K562 (cell line): ENCODE measurements at regions of chr1 and their contacts with region 1.

Region 1: DNA sequence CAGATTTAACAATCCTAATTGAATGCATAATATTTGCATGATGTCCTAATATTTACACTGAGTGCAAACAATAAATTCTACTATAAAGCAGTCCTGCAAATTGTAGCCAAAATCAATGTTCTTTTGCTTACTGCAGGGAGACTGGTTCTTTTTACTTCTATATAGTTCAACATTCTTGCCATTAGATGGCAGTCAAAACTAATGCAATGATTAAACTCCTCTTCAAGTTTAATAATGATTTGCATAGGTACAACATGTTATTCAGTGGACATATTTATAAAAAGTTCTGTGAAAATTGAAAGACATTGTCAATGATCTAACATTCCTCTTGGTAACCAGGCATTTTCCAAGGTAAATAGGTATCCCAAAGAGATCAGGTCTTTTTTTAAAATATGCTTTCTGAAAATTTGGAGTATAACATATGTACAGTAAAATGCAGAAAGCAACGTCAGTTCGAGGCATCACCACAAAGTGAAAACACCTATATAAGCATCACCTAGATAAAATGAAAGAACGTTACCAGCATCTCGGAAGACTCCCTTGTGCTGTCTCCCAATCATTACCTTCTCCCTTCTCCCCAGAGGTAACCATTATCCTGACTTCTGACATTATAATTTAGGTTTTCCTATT is 9.8 kb upstream of the FNBP1L start:
- DNase-seq: peak; percentile 22 to 52 (median 38)
- ATAC-seq: peak; percentile 85
- H3K4me3 ChIP-seq: no peak overlapping the region
- H3K27ac ChIP-seq: no peak overlapping the region
- H3K4me1 ChIP-seq: peaks cover 0 to 8% of the 10 kb centered on the region in 2 experiments; a peak in 2 of 5 replicates
- H3K27me3 ChIP-seq: no peaks in the 10 kb centered on the region
- CTCF ChIP-seq: peak; percentile 40 to 80 (median 41); a peak in 4 of 6 replicates
- EP300 ChIP-seq: no peak
- POLR2A ChIP-seq: no peak
- RAD21 ChIP-seq: peak; percentile 93 to 94

Region 2: DNA sequence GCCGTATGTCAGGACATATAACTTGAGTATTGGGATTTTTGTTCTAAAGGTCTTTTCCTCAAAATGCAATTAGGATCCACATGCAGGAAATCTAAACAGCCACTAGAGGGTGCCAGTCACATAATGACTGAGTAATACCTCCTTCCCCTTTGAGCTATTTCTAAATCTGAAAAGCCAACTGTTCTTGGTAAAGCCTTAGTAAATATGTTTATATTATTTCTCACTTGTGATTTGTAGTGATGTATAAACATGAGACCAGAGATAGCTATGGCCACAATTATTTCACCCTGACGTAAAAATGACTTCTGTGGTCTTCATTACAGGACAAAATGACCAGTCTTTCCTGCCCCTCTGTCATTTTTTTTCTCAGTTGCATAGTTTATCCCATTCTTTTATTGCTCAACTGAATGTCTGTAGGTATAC is 133.4 kb before region 1 on chr1:
- CTCF ChIA-PET with region 1: interaction called, 4 read pairs
- POLR2A ChIA-PET with region 1: no interaction called
- in situ Hi-C with region 1: loop called (anchors 10 kb)
- intact Hi-C with region 1: loop called (anchors 5 kb)
- DNase-seq: peak; percentile 46 to 67 (median 52)
- ATAC-seq: peak; percentile 90
- H3K4me3 ChIP-seq: no peak overlapping the region
- H3K27ac ChIP-seq: no peak overlapping the region
- H3K4me1 ChIP-seq: peaks cover 0 to 3% of the 10 kb centered on the region in 2 experiments; a peak in 2 of 5 replicates
- H3K27me3 ChIP-seq: no peaks in the 10 kb centered on the region
- CTCF ChIP-seq: peak; percentile 58 to 90 (median 79); a peak in 5 of 6 replicates
- EP300 ChIP-seq: no peak
- POLR2A ChIP-seq: no peak
- RAD21 ChIP-seq: peak; percentile 78 to 93

Region 3: DNA sequence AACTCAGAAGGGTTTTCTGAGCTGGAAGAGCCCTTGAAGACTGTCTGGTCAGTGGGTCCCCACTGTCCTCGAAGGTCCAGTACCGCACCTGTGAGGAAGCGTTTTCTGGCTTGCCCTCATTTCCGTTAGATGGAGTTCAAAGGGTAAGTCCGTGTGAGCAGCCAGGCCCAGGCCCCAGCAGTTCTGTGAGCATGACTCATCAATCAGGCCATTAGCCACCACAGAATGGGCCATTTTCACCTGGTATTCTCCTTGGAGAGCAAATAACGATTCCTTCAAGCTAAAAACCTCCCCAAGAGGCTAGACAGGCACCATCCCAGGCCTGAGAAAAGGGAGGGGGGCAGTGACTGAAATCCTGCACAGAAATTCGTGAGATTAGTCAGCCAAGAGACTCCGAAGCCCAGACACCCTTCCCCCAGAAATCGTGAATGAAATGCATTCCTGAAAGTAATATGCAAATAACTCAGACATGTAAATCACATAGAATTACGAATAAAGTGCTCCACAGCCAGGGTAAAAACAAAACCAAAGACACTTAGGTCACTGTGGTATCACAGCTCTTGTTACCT is 177.6 kb after region 1 on chr1:
- CTCF ChIA-PET with region 1: interaction called, 3 read pairs
- POLR2A ChIA-PET with region 1: no interaction called
- in situ Hi-C with region 1: no loop called
- intact Hi-C with region 1: loop called (anchors 2 kb)
- DNase-seq: peak; percentile 44 to 54 (median 50)
- ATAC-seq: peak; percentile 59
- H3K4me3 ChIP-seq: no peak overlapping the region
- H3K27ac ChIP-seq: no peak overlapping the region
- H3K4me1 ChIP-seq: peaks cover 0 to 6% of the 10 kb centered on the region in 2 experiments; a peak in 3 of 5 replicates
- H3K27me3 ChIP-seq: 0 out of 5 replicates have a peak, but pooled peaks cover 0 to 3% of the 10 kb centered on the region in 2 experiments
- CTCF ChIP-seq: no peak
- EP300 ChIP-seq: no peak
- POLR2A ChIP-seq: no peak
- RAD21 ChIP-seq: no peak

Region 4: GRCh38 chr1:93814059-93814794 is 376.1 kb after region 1 on chr1:
- CTCF ChIA-PET with region 1: interaction called, 15 read pairs
- POLR2A ChIA-PET with region 1: no interaction called
- in situ Hi-C with region 1: loop called (anchors 10 kb)
- intact Hi-C with region 1: loop called (anchors 2 kb)
- DNase-seq: peak; percentile 42 to 75 (median 50)
- ATAC-seq: peak; percentile 89
- H3K4me3 ChIP-seq: no peak overlapping the region
- H3K27ac ChIP-seq: no peak overlapping the region
- H3K4me1 ChIP-seq: peaks cover 0 to 15% of the 10 kb centered on the region in 2 experiments; a peak in 3 of 5 replicates
- H3K27me3 ChIP-seq: peaks cover 12 to 15% of the 10 kb centered on the region in 2 experiments; a peak in 4 of 5 replicates
- CTCF ChIP-seq: peak; percentile 88 to 96 (median 91)
- EP300 ChIP-seq: no peak
- POLR2A ChIP-seq: no peak
- RAD21 ChIP-seq: peak; percentile 99 to 100

Region 5: GRCh38 chr1:93846211-93846991 is 408.3 kb after region 1 on chr1:
- CTCF ChIA-PET with region 1: interaction called, 5 read pairs
- POLR2A ChIA-PET with region 1: interaction called, 4 read pairs
- in situ Hi-C with region 1: no loop called
- intact Hi-C with region 1: loop called (anchors 1 kb)
- DNase-seq: peak; percentile 80 to 90 (median 82)
- ATAC-seq: peak; percentile 84
- H3K4me3 ChIP-seq: peak overlapping the region; percentile 87
- H3K27ac ChIP-seq: peak overlapping the region; percentile 87
- H3K4me1 ChIP-seq: peaks cover 17 to 21% of the 10 kb centered on the region in 2 experiments; a peak in 4 of 5 replicates
- H3K27me3 ChIP-seq: no peaks in the 10 kb centered on the region
- CTCF ChIP-seq: peak; percentile 31 to 51 (median 40); a peak in 5 of 6 replicates
- EP300 ChIP-seq: no peak
- POLR2A ChIP-seq: peak; percentile 82
- RAD21 ChIP-seq: no peak